ENCODE measurements at regions of chr9 and their contacts with region 1.

Region 1: GRCh38 chr9:121326130-121326838 is 43.8 kb downstream of the STOM start:
- DNase-seq: peak in 1 of 2 experiments; percentile 88
- ATAC-seq: peak; percentile 38 to 65; a peak in 5 of 6 replicates
- H3K4me3 ChIP-seq: no peak overlapping the region
- H3K27ac ChIP-seq: peak overlapping the region; percentile 90 to 92
- H3K4me1 ChIP-seq: peaks cover 61% of the 10 kb centered on the region
- CTCF ChIP-seq: no peak
- EP300 ChIP-seq: peak in 1 of 2 experiments; percentile 24; a peak in 1 of 5 replicates
- POLR2A ChIP-seq: no peak
- RAD21 ChIP-seq: no peak

Region 2: GRCh38 chr9:121038804-121039203 is 287.5 kb before region 1 on chr9:
- CTCF ChIA-PET with region 1: no interaction called
- POLR2A ChIA-PET with region 1: no interaction called
- DNase-seq: no peak
- ATAC-seq: no peak
- H3K4me3 ChIP-seq: no peak overlapping the region
- H3K27ac ChIP-seq: no peak overlapping the region
- H3K4me1 ChIP-seq: peaks cover 16% of the 10 kb centered on the region
- CTCF ChIP-seq: no peak
- EP300 ChIP-seq: no peak
- POLR2A ChIP-seq: no peak
- RAD21 ChIP-seq: no peak

Region 3: DNA sequence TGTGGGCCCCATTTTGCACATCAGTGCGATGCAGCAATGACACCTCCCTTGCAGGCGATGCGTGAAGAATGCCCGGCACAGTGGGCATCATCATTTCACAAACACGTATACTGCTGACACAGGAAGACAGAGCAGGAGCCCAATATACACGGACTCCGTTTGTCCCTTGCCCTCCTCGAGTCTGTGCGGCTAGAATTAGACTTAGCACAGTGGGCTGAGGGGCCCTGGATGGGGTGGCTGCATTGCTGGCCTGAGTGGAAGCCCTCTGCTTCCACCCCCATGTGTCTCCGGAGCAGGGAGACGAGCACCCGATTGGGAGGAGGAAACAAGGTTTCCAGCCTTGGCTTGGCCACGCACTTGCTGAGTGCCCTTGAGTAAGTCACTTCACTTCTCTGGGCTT is 17.5 kb before region 1 on chr9:
- CTCF ChIA-PET with region 1: no interaction called
- POLR2A ChIA-PET with region 1: no interaction called
- DNase-seq: no peak
- ATAC-seq: no peak
- H3K4me3 ChIP-seq: no peak overlapping the region
- H3K27ac ChIP-seq: no peak overlapping the region
- H3K4me1 ChIP-seq: peaks cover 12% of the 10 kb centered on the region
- CTCF ChIP-seq: no peak
- EP300 ChIP-seq: no peak
- POLR2A ChIP-seq: no peak
- RAD21 ChIP-seq: no peak

Region 4: DNA sequence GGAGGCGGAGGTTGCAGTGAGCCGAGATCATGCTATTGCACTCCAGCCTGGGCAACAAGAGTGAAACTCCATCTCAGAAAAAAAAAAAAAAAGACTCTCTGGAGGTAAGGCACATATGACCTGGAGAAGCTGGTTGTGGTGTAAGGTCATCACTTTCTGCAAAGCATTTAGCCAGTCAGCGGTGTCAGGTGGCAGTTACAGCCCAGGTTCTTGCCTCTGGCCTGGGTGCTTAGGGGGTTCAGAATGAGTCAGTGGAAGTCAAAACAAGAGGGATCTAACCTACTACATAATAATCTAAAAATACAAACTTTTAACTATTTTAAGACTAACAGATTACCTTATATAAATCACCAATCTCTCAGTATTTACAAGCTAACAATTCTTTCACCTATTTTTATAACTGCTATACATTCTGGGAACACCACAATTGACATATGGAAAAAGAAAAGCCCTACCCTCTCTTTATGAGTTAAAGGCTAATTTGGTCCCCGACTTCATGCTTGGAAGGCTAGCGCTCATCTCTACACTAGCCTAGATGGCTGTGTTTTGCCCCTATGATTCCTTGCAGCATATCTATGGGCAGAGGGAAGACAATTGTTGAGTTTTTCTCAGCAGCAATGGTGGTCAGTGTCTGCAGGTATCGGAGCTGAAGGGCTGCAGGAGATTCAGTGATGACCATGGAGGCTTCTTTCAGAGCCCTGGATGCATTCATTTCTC is 14.6 kb after region 1 on chr9:
- CTCF ChIA-PET with region 1: interaction called, 62 read pairs
- POLR2A ChIA-PET with region 1: no interaction called
- DNase-seq: no peak
- ATAC-seq: no peak
- H3K4me3 ChIP-seq: no peak overlapping the region
- H3K27ac ChIP-seq: no peak overlapping the region
- H3K4me1 ChIP-seq: no peaks in the 10 kb centered on the region
- CTCF ChIP-seq: no peak
- EP300 ChIP-seq: no peak
- POLR2A ChIP-seq: no peak
- RAD21 ChIP-seq: no peak

Region 5: GRCh38 chr9:121362813-121363621 is 36.7 kb after region 1 on chr9:
- CTCF ChIA-PET with region 1: interaction called, 29 read pairs
- POLR2A ChIA-PET with region 1: no interaction called
- DNase-seq: peak in 1 of 2 experiments; percentile 48
- ATAC-seq: peak; percentile 62 to 79; a peak in 5 of 6 replicates
- H3K4me3 ChIP-seq: no peak overlapping the region; the same call in 2 of the 3 replicates
- H3K27ac ChIP-seq: peak overlapping the region; percentile 55 to 77; a peak in 5 of 6 replicates
- H3K4me1 ChIP-seq: peaks cover 88% of the 10 kb centered on the region
- CTCF ChIP-seq: no peak
- EP300 ChIP-seq: no peak
- POLR2A ChIP-seq: no peak
- RAD21 ChIP-seq: no peak

Region 6: DNA sequence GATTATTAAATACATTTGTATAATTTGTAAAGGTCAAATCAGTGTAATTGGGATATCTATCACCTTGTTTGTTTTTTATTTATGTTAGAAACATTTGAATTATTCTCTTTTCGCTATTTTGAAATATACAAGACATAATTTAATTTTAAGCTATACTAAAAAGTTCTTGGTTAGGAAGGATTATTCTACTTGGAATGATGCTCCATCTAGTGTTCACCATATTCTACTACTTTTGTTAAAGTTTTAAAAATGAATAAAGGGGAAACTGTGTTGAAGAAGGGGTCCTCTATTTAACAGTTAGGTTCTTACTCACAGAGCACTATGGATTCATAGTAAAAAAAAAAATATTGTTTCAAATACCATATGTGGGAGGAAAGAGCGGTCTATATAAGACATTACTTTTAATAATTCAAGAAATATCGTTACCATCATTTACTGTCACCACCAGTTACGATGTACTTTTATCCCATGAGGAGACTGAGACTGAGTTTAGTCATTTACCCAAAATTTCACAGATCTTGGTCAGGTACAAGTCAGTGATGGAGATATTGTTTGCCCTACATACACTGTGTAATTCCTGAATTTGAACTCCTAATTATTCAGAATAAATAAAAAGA is 50.0 kb after region 1 on chr9:
- CTCF ChIA-PET with region 1: interaction called, 301 read pairs
- POLR2A ChIA-PET with region 1: interaction called, 3 read pairs
- DNase-seq: no peak
- ATAC-seq: no peak
- H3K4me3 ChIP-seq: no peak overlapping the region
- H3K27ac ChIP-seq: peak overlapping the region in 1 of 2 experiments; percentile 94; a peak in 2 of 6 replicates
- H3K4me1 ChIP-seq: peaks cover 45% of the 10 kb centered on the region
- CTCF ChIP-seq: peak; percentile 52
- EP300 ChIP-seq: no peak
- POLR2A ChIP-seq: no peak
- RAD21 ChIP-seq: peak; percentile 72 to 79

Region 7: GRCh38 chr9:121383715-121384114 is 57.4 kb after region 1 on chr9:
- CTCF ChIA-PET with region 1: interaction called, 301 read pairs
- POLR2A ChIA-PET with region 1: no interaction called
- DNase-seq: no peak
- ATAC-seq: no peak
- H3K4me3 ChIP-seq: no peak overlapping the region
- H3K27ac ChIP-seq: no peak overlapping the region
- H3K4me1 ChIP-seq: no peaks in the 10 kb centered on the region
- CTCF ChIP-seq: no peak
- EP300 ChIP-seq: no peak
- POLR2A ChIP-seq: no peak
- RAD21 ChIP-seq: no peak

Measured in A549 (cell line).